Sigmoid colon (tissue), 7 donors: ENCODE measurements at regions of chr13 and their contacts with region 1.

Region 1: GRCh38 chr13:39942552-39943273 is 287.3 kb downstream of the COG6 start:
- DNase-seq: peak; percentile 69
- H3K4me3 ChIP-seq: no peak overlapping the region
- H3K27ac ChIP-seq: no peak overlapping the region
- H3K4me1 ChIP-seq: no peaks in the 10 kb centered on the region
- H3K27me3 ChIP-seq: no peaks in the 10 kb centered on the region
- CTCF ChIP-seq: peak; percentile 35 to 85 (median 81)
- EP300 ChIP-seq: no peak
- POLR2A ChIP-seq: no peak

Region 2: GRCh38 chr13:39684531-39685137 is 258.1 kb before region 1 on chr13:
- intact Hi-C with region 1: loop called (anchors 10 kb)
- DNase-seq: no peak
- H3K4me3 ChIP-seq: no peak overlapping the region
- H3K27ac ChIP-seq: no peak overlapping the region
- H3K4me1 ChIP-seq: no peaks in the 10 kb centered on the region
- H3K27me3 ChIP-seq: no peaks in the 10 kb centered on the region
- CTCF ChIP-seq: peak in 3 of 4 experiments; percentile 22 to 48 (median 38)
- EP300 ChIP-seq: no peak
- POLR2A ChIP-seq: no peak

Region 3: DNA sequence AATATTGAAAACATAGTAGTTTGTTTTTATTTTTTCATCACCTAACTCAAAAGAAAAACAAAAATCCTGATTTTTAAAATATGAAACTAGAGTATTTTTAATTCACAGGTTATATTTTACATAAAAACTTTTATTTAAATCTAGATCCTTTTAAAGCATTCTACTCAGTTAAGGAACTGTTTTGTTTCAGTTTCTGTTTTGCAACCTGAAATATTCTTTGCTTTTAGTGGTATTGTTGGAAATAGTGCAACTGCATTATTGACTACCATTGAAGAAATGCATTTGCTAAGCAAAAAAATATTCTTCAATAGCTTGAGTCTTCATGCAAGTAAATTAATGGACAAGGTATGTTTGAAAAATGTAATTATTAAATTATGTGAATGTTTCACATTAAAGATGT is 243.4 kb before region 1 on chr13:
- intact Hi-C with region 1: no loop called
- DNase-seq: no peak
- H3K4me3 ChIP-seq: no peak overlapping the region
- H3K27ac ChIP-seq: no peak overlapping the region
- H3K4me1 ChIP-seq: no peaks in the 10 kb centered on the region
- H3K27me3 ChIP-seq: no peaks in the 10 kb centered on the region
- CTCF ChIP-seq: no peak
- EP300 ChIP-seq: no peak
- POLR2A ChIP-seq: no peak